Activated B cell treated with CpG ODN at 0.5 μM for 24 hours (primary cell): ENCODE measurements at regions of chr10 and their contacts with region 1.

Region 1: DNA sequence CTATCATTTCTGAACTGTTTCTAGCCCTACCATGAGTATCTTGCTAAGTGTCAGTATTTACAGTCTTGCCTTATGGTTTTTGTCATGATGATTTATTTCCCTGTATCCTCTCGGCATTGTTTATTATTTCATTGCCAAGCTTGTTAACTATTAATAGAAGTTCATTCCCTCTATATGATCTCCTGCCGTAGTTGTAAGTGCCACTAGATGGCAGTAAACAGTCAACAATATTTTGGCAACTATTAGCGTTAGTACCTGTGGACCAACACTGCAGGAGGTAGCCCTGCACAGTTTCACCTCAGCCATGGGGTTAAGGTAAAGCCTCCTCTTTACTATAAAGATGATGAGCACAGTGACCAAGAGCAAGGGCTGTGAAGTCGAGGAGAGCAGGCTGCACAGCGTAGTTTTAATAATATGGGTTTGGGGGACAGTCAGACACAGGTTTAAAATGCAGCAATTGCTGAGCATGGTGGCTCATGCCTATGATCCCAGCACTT is 26.1 kb upstream of the CCNJ start:
- DNase-seq: no peak
- ATAC-seq: peak; percentile 74
- H3K4me3 Mint-ChIP-seq: no peak overlapping the region
- H3K27ac Mint-ChIP-seq: no peak overlapping the region
- H3K4me1 Mint-ChIP-seq: no peaks in the 10 kb centered on the region
- H3K27me3 Mint-ChIP-seq: no peaks in the 10 kb centered on the region
- CTCF ChIP-seq: peak; percentile 52

Region 2: DNA sequence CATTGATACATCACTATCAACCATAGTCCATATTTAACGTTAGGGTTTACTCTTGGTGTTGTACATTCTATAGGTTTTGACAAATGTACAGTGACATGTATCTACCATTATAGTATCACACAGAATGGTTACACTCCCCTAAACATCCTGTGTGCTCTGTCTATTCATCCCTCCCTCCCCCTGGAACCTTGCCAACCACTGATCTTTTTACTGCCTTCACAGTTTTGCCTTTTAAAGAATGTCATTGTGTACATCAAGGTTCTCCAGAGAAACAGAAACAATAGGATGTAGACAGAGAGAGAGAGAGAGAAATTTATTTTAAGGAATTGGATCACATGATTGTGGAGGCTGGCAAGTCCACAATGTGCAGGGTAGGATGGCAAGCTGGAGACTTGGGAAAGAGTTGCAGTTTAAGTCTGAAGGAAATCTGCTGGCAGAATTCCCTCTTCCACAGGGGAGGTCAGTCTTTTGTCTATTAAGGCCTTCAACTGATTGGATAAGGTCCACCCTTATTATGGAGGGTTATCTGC is 18.9 kb before region 1 on chr10:
- CTCF ChIA-PET with region 1: interaction called, 14 read pairs
- POLR2A ChIA-PET with region 1: interaction called, 4 read pairs
- intact Hi-C with region 1: no loop called
- DNase-seq: no peak
- ATAC-seq: no peak
- H3K4me3 Mint-ChIP-seq: no peak overlapping the region
- H3K27ac Mint-ChIP-seq: no peak overlapping the region
- H3K4me1 Mint-ChIP-seq: no peaks in the 10 kb centered on the region
- H3K27me3 Mint-ChIP-seq: no peaks in the 10 kb centered on the region
- CTCF ChIP-seq: no peak

Region 3: GRCh38 chr10:96043033-96043932 is 26.0 kb after region 1 on chr10 and contains the start of gene CCNJ:
- CTCF ChIA-PET with region 1: interaction called, 3 read pairs
- POLR2A ChIA-PET with region 1: no interaction called
- intact Hi-C with region 1: loop called (anchors 2 kb)
- DNase-seq: peak; percentile 83
- ATAC-seq: peak; percentile 88
- H3K4me3 Mint-ChIP-seq: peak within 1 kb of the TSS; percentile 93
- H3K27ac Mint-ChIP-seq: peak within 1 kb of the TSS; percentile 80
- H3K4me1 Mint-ChIP-seq: peaks cover 41% of the 10 kb centered on the region
- H3K27me3 Mint-ChIP-seq: no peaks in the 10 kb centered on the region
- CTCF ChIP-seq: no peak
- total RNA-seq, gene CCNJ: 9.8 and 10.2 TPM in 2 replicates

Region 4: DNA sequence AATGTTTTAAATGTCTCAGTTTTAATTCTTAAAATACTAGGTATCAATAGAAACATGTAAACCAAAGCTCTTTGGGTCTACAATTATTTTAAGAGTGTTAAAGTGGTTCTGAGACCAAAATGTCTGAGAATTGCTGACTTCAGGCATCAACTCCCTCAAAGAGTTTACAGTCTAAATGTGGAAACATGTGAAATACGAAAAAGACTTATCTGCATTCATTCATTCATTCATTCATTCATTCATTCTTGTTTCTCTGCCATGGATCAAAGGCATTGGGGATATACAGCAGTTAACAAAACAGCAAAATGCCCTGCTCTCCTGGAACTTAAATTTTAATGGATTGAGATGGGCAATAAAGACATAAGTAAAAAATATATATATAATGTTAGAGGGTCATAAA is 184.3 kb after region 1 on chr10:
- CTCF ChIA-PET with region 1: no interaction called
- POLR2A ChIA-PET with region 1: no interaction called
- intact Hi-C with region 1: loop called (anchors 5 kb)
- DNase-seq: no peak
- ATAC-seq: no peak
- H3K4me3 Mint-ChIP-seq: no peak overlapping the region
- H3K27ac Mint-ChIP-seq: no peak overlapping the region
- H3K4me1 Mint-ChIP-seq: no peaks in the 10 kb centered on the region
- H3K27me3 Mint-ChIP-seq: no peaks in the 10 kb centered on the region
- CTCF ChIP-seq: no peak

Region 5: GRCh38 chr10:96319754-96320474 is 302.7 kb after region 1 on chr10:
- CTCF ChIA-PET with region 1: interaction called, 16 read pairs
- POLR2A ChIA-PET with region 1: no interaction called
- intact Hi-C with region 1: loop called (anchors 1 kb)
- DNase-seq: no peak
- ATAC-seq: no peak
- H3K4me3 Mint-ChIP-seq: no peak overlapping the region
- H3K27ac Mint-ChIP-seq: no peak overlapping the region
- H3K4me1 Mint-ChIP-seq: no peaks in the 10 kb centered on the region
- H3K27me3 Mint-ChIP-seq: peaks cover 14% of the 10 kb centered on the region
- CTCF ChIP-seq: no peak

Region 6: DNA sequence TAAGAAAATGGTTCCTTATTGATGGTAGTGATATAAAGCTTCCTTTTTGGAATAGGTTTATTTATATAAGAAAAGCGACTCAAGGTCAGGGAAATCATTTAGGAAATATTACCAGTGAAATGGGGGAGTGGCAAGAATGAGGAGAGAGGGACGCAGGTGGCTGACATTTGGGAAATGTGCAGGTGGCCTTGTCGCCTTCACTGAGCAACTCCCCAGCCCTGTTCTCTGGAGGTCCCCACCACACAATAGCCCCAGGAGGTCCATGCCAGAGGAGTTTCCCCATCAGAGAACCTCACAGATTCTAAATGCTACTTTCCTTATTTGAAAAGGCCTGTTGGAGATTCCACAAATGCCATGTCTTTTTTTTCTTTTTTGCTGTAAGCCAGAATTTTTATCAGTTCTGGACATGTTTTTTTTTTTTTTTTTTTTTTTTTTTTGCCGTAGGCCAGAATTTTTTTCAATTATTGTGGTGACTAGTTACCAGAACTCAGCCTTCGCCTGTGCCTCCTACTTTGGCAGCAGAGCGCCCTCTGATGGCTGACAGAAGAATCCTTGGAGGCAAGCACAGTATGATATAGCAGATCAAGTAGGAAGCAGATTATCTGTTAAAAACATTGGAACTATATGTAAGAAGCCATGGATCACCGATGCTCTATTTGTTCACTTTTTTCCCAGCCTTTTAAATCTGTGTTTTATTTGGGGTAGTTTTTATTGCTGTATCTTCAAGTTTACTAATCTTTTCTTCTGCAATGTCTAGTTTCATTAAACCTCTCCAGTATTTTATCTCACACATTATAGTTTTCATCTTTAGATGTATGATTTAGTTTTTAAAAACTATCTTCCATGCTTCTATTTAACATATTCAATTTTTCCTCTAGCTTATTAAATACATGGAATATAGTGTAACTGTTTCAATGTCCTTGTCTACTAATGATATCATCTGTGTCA is 323.0 kb after region 1 on chr10:
- CTCF ChIA-PET with region 1: interaction called, 24 read pairs
- POLR2A ChIA-PET with region 1: no interaction called
- intact Hi-C with region 1: loop called (anchors 1 kb)
- DNase-seq: peak; percentile 22
- ATAC-seq: peak; percentile 78
- H3K4me3 Mint-ChIP-seq: no peak overlapping the region
- H3K27ac Mint-ChIP-seq: no peak overlapping the region
- H3K4me1 Mint-ChIP-seq: peaks cover 6% of the 10 kb centered on the region
- H3K27me3 Mint-ChIP-seq: no peaks in the 10 kb centered on the region
- CTCF ChIP-seq: no peak